ENCODE measurements at regions of chr14 and their contacts with region 1.

Region 1: DNA sequence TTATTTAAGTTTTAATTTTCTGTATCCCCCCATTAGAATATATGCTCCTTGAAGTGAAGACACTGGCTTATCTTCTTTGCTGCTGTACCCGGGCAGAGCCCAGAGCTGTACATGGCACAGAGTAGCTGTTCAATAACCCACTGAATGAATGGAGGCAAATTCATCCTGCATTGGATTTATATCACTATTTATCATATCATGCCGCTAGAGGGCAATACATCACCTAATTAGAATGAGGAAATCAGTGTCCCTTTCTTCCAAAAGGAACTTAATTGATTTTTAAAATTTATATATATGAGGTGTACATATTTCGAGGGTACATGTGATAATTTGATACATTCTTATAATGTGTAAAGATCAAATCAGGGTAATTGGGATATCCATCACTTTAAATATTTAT is 89.2 kb upstream of the TMEM260 start:
- H3K4me3 Mint-ChIP-seq: no peak overlapping the region
- H3K27ac Mint-ChIP-seq: no peak overlapping the region
- H3K4me1 Mint-ChIP-seq: peaks cover 5% of the 10 kb centered on the region
- H3K27me3 Mint-ChIP-seq: peaks cover 2% of the 10 kb centered on the region

Region 2: DNA sequence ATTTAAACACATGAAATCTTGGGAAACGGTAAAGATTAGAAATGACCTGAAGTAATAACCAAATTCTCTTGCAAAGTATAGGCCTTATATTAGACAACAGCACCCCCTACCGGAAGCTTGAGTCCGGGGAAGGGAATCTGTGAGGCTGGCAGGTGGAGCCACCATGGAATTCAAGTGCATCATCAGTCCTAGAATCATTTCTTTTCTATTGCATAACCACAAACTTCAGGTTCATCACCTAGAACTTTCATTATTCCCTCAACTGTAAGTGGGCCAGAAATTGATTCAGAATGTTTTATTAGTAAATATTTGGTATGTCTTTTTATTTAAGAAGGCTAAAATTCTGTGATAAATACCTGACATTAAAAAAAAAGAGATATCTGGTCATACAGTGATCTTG is 826.9 kb after region 1 on chr14:
- intact Hi-C with region 1: loop called (anchors 1 kb)
- H3K4me3 Mint-ChIP-seq: no peak overlapping the region
- H3K27ac Mint-ChIP-seq: no peak overlapping the region
- H3K4me1 Mint-ChIP-seq: peaks cover 6% of the 10 kb centered on the region
- H3K27me3 Mint-ChIP-seq: peaks cover 3% of the 10 kb centered on the region

Measured in dendritic cell treated with granulocyte-macrophage colony-stimulating factor and Interleukin-4, amounts not matched to agents 40 ng/mL and 50 ng/mL, for 4 days (primary cell).